ENCODE measurements at regions of chr1 and their contacts with region 1.

Region 1: GRCh38 chr1:229156872-229157271 is 114.0 kb upstream of the RAB4A start:
- DNase-seq: no peak
- ATAC-seq: peak in 3 of 4 donors; percentile 66 to 81 (median 66)
- H3K4me3 ChIP-seq: no peak overlapping the region
- H3K27ac ChIP-seq: peak overlapping the region in 2 of 12 donors; percentile 54 to 90
- H3K4me1 ChIP-seq: peaks cover 0 to 56% (median 2%) of the 10 kb centered on the region in 12 donors
- H3K27me3 ChIP-seq: peaks cover 0 to 1% (median 0%) of the 10 kb centered on the region in 9 donors
- CTCF ChIP-seq: peak; percentile 20 to 68 (median 56)
- POLR2A ChIP-seq: no peak

Region 2: GRCh38 chr1:228664399-228664914 is 492.4 kb before region 1 on chr1:
- intact Hi-C with region 1: loop called in 3 of 10 experiments (anchors 2 to 10 kb)
- DNase-seq: peak; percentile 57 to 72 (median 67)
- ATAC-seq: peak in 2 of 4 donors; percentile 34 to 57
- H3K4me3 ChIP-seq: no peak overlapping the region
- H3K27ac ChIP-seq: no peak overlapping the region
- H3K4me1 ChIP-seq: peaks cover 0 to 9% (median 2%) of the 10 kb centered on the region in 12 donors
- H3K27me3 ChIP-seq: peaks cover 0 to 8% (median 0%) of the 10 kb centered on the region in 9 donors
- CTCF ChIP-seq: peak; percentile 75 to 93 (median 83)
- POLR2A ChIP-seq: no peak

Region 3: DNA sequence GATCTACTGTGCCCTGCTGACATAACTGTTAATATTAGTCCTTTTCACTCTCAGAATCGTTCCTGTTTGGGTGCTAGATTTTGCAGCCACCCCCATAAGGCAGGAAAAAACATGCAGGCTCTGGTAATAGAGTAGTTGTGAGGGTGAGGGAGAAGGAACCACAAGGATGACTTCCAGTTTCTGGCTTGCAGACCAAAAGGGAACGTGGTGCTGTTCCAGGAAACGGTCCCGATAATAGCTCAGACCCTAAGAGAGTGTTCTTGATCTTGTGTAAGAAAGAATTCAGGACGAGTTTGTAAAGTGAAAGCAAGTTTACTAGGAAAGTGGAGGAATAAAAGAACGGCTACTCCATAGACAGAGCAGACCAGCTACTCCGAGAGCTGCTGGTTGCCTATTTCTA is 472.3 kb before region 1 on chr1:
- intact Hi-C with region 1: loop called in 1 of 10 experiments (anchors 10 kb)
- DNase-seq: no peak
- ATAC-seq: peak in 3 of 4 donors; percentile 42 to 66 (median 62)
- H3K4me3 ChIP-seq: peak overlapping the region in 2 of 12 donors; percentile 6 to 19
- H3K27ac ChIP-seq: peak overlapping the region in 6 of 12 donors; percentile 10 to 83 (median 18)
- H3K4me1 ChIP-seq: peaks cover 0 to 22% (median 5%) of the 10 kb centered on the region in 12 donors
- H3K27me3 ChIP-seq: peaks cover 0 to 3% (median 0%) of the 10 kb centered on the region in 9 donors
- CTCF ChIP-seq: no peak
- POLR2A ChIP-seq: no peak

Region 4: GRCh38 chr1:228691926-228692325 is 464.9 kb before region 1 on chr1:
- intact Hi-C with region 1: loop called in 3 of 10 experiments (anchors 5 to 10 kb)
- DNase-seq: no peak
- ATAC-seq: peak in 1 of 4 donors; percentile 31
- H3K4me3 ChIP-seq: no peak overlapping the region
- H3K27ac ChIP-seq: no peak overlapping the region
- H3K4me1 ChIP-seq: peaks cover 0 to 12% (median 0%) of the 10 kb centered on the region in 12 donors
- H3K27me3 ChIP-seq: no peaks in the 10 kb centered on the region
- CTCF ChIP-seq: peak; percentile 27 to 59 (median 39)
- POLR2A ChIP-seq: no peak

Region 5: DNA sequence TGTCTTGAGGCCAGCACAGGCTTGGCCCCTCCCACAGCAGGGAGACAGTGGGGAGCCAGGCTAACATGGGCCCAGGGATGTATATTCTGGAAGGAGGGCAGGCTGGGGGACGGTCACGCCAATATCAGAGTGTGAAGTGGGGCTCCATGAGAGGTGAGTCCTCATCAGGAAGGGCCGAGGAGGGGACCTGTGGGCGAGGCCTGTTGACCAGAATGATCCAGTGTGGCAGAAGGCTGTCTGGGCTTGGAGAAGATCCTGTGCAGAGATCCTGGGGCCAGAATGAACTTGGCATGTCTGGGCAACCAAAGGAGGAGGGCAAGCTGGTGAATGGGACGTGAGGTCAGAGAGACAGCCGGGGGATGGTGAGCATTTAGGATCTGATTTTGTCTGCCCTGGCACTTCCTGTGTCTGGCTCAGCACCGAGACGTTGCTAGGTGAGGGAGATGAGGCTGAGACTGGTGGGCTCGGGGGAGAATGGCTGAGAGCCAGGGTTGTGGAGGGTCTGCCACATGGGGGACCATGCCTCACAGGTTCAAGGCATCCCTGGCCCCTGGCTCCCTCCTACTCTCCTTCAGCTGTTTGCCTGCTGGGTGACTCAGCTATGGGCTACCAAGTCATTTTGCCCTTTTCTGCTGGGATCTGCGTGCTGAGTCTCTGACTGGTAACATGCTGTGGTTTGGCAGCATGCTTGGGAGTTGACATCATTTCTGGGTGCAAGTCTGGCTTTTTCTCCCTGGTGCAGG is 927.4 kb after region 1 on chr1:
- intact Hi-C with region 1: no loop called
- DNase-seq: peak in 2 of 5 donors; percentile 63 to 75
- ATAC-seq: peak in 3 of 4 donors; percentile 16 to 79 (median 77)
- H3K4me3 ChIP-seq: no peak overlapping the region
- H3K27ac ChIP-seq: peak overlapping the region in 6 of 12 donors; percentile 16 to 48 (median 24)
- H3K4me1 ChIP-seq: peaks cover 0 to 64% (median 39%) of the 10 kb centered on the region in 12 donors
- H3K27me3 ChIP-seq: no peaks in the 10 kb centered on the region
- CTCF ChIP-seq: no peak
- POLR2A ChIP-seq: no peak